ENCODE measurements at regions of chr17 and their contacts with region 1.

Region 1: GRCh38 chr17:28726226-28727130 is at the start of gene TLCD1:
- DNase-seq: peak; percentile 93 to 98
- H3K4me3 ChIP-seq: peak within 1 kb of the TSS; percentile 81 to 97 (median 89)
- H3K27ac ChIP-seq: peak within 1 kb of the TSS; percentile 89
- H3K4me1 ChIP-seq: peaks cover 0 to 12% (median 5%) of the 10 kb centered on the region in 4 experiments; a peak in 6 of 7 replicates
- H3K27me3 ChIP-seq: no peaks in the 10 kb centered on the region
- CTCF ChIP-seq: peak; percentile 98 to 99 (median 99)
- EP300 ChIP-seq: peak in 1 of 2 experiments; percentile 70; a peak in 1 of 3 replicates
- POLR2A ChIP-seq: no peak; a peak in 2 of 3 replicates
- RAD21 ChIP-seq: peak; percentile 98 to 99
- total RNA-seq, gene TLCD1: 40.7 and 45.3 TPM in 2 replicates

Region 2: DNA sequence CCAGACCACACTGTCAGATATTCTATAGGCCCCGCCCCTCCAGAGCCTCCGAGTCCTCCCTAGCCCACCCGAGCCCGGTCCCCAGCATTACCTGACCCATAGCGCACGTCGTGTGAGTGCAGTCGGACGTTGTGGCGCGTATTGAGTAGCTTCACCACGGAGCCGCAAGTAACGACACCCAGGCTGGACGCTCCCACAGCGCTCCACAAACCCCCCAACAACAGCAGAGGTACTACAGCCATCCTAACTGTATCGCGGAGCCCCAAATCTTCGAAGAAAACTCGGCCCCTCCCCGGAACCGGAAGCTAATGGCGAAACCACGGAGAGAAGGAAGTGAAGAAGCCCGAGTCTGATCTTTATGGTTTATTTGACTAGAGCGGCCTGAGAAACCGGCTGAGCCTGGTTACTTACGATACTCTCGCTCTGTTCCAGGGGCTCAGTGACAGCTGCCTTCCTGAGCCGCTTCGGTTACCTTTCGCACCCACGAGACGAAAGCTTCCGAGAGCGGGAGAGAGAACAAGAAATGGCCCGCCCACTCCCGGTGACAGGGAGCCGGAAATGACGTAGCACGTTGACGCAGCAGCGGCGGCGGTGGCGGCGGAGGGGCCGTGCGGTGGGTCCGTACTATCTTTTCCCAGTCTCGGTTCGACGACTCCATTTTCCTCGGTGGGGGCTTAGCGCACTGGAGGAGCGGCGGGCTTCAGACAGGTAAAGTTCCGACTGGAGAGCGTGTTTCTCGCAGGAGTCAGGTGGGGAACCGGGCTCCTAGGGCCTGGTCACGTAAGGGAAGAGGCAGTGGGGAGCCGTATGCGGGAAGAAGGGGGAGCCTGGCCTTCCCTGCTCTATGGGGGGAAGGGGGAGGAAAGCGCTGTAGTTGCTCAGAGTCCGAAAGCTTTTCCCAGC is 64.6 kb before region 1 on chr17 and contains the starts of genes SDF2 and SUPT6H:
- CTCF ChIA-PET with region 1: no interaction called
- POLR2A ChIA-PET with region 1: interaction called, 10 read pairs
- DNase-seq: peak in 1 of 2 experiments; percentile 98
- H3K4me3 ChIP-seq: peak within 1 kb of the TSS; percentile 85 to 99 (median 96)
- H3K27ac ChIP-seq: peak within 1 kb of the TSS; percentile 92
- H3K4me1 ChIP-seq: peaks cover 0 to 2% (median 0%) of the 10 kb centered on the region in 4 experiments; a peak in 3 of 7 replicates
- H3K27me3 ChIP-seq: no peaks in the 10 kb centered on the region
- CTCF ChIP-seq: no peak
- EP300 ChIP-seq: no peak
- POLR2A ChIP-seq: peak; percentile 75 to 76; a peak in 2 of 3 replicates
- RAD21 ChIP-seq: no peak
- total RNA-seq, gene SDF2: 43.6 and 44.8 TPM in 2 replicates
- total RNA-seq, gene SUPT6H: 59.9 and 62.4 TPM in 2 replicates

Region 3: DNA sequence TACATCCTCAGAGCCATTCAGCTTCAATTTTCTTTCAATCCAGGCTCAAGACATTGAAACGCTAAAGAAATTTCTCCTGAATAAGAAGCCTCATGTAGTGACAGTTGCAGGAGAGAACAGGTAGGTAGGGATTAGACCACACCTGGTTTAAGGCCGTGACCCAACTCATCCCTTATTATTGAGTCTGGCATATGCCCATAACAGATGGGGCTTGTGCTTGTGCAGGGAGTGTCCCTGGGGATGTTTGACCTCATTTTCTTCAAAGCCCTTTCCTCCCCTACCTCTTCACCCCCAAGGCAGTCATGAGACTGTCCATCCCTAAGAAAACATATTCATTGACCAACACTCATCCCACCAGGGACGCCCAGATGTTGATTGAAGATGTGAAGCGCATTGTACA is 40.2 kb before region 1 on chr17:
- CTCF ChIA-PET with region 1: no interaction called
- POLR2A ChIA-PET with region 1: no interaction called
- DNase-seq: no peak
- H3K4me3 ChIP-seq: no peak overlapping the region
- H3K27ac ChIP-seq: no peak overlapping the region
- H3K4me1 ChIP-seq: no peaks in the 10 kb centered on the region
- H3K27me3 ChIP-seq: no peaks in the 10 kb centered on the region
- CTCF ChIP-seq: no peak
- EP300 ChIP-seq: no peak
- POLR2A ChIP-seq: no peak
- RAD21 ChIP-seq: no peak

Region 4: DNA sequence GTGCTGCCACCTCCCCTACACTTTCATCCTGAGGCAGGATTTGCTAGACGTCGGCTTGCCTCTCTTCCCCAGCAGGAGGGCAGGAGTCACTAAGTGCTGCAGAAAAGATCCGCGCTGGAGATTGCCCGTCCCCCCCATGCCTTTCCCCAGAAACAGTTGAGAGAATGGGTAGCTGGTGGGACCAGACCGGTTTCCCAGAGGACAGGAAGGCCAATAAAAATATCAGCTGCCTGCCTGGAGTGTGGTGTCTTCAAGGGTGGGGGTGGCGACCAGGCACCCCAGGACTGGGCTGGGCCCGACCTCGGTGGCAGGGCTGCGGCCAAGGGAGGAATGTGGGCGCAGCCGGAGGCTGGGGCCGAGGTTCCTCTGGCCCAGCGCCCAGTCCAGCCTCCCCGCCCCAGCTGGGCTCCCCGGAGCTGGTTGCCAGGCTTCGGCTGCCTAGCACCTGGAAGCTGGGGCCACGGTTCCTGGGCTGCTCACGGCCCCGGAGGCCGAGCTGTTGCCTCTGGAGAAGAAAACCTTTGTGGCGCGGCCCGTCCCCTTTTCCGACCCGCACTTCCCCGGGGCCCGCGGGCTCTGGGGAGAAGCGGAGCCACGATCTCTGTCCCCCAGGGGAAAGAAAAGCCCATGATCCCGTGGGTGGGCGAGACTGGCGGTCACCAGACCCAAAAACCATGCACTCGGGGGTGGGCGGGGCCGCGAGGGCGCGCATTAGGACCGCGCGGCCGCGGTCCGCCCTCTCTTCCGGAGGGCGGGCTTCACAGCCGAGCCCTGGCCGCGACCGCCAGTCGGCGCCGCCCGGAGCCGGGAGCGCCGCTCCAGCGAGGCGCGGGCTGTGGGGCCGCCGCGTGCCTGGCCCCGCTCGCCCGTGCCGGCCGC is 17.0 kb after region 1 on chr17 and contains the start of gene TRAF4:
- CTCF ChIA-PET with region 1: interaction called, 316 read pairs
- POLR2A ChIA-PET with region 1: interaction called, 813 read pairs
- DNase-seq: peak in 1 of 2 experiments; percentile 87
- H3K4me3 ChIP-seq: peak within 1 kb of the TSS; percentile 94 to 99 (median 98)
- H3K27ac ChIP-seq: peak within 1 kb of the TSS; percentile 99
- H3K4me1 ChIP-seq: peaks cover 0 to 30% (median 24%) of the 10 kb centered on the region in 4 experiments; a peak in 6 of 7 replicates
- H3K27me3 ChIP-seq: no peaks in the 10 kb centered on the region
- CTCF ChIP-seq: peak in 2 of 3 experiments; percentile 8 to 17; a peak in 2 of 4 replicates
- EP300 ChIP-seq: no peak
- POLR2A ChIP-seq: peak; percentile 84 to 94; a peak in 2 of 3 replicates
- RAD21 ChIP-seq: no peak
- total RNA-seq, gene TRAF4: 167 TPM in 2 replicates

Region 5: GRCh38 chr17:28861393-28862203 is 135.1 kb after region 1 on chr17:
- CTCF ChIA-PET with region 1: interaction called, 11 read pairs
- POLR2A ChIA-PET with region 1: interaction called, 4 read pairs
- DNase-seq: no peak
- H3K4me3 ChIP-seq: 0 out of 8 replicates have a peak overlapping the region, but pooled peaks of 1 of the 4 experiments have one; percentile 33
- H3K27ac ChIP-seq: no peak overlapping the region
- H3K4me1 ChIP-seq: peaks cover 0 to 6% (median 0%) of the 10 kb centered on the region in 4 experiments; a peak in 2 of 7 replicates
- H3K27me3 ChIP-seq: no peaks in the 10 kb centered on the region
- CTCF ChIP-seq: no peak
- EP300 ChIP-seq: no peak
- POLR2A ChIP-seq: no peak
- RAD21 ChIP-seq: no peak

Region 6: DNA sequence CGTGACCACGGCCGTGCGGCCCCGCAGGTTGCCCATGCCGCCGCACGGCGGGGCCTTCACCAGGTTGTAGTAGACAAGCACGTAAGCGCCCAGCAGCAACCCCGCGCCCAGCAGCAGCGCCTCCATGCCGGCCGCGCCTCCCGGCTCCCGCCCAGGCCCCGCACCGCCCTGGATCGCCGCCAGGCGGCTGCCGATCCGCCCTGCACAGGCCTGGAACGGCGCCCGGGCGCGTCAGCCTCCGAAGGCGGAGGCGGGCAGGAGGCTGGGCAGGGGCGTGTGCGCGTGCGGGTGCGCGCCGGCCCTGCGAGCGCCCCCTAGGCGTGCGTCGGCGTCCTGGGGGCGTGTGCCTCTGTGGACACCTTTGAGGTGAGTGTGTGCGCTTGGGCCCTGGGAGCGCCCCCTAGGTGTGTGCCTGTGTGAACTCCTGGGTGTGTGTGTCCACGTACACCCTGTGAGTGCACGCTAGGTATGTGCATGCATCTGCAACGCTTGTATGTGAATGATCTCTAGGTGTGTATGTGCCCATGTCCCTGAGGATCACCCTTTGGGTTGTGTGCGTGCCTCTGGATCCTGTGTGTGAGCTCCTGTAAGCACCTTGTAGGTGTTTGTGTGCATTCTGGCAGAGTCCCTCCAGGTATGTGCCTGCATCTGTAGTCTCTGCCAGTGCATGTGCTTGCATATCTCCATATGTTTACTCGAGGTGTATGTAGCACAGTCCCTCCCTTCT is 176.5 kb after region 1 on chr17 and contains the start of gene DHRS13:
- CTCF ChIA-PET with region 1: interaction called, 45 read pairs
- POLR2A ChIA-PET with region 1: interaction called, 71 read pairs
- DNase-seq: peak; percentile 87 to 97
- H3K4me3 ChIP-seq: peak within 1 kb of the TSS; percentile 52 to 85 (median 72)
- H3K27ac ChIP-seq: peak within 1 kb of the TSS; percentile 54
- H3K4me1 ChIP-seq: peaks cover 0 to 9% (median 5%) of the 10 kb centered on the region in 4 experiments; a peak in 5 of 7 replicates
- H3K27me3 ChIP-seq: no peaks in the 10 kb centered on the region
- CTCF ChIP-seq: peak; percentile 76 to 100 (median 99)
- EP300 ChIP-seq: peak in 1 of 2 experiments; percentile 65; a peak in 1 of 3 replicates
- POLR2A ChIP-seq: no peak
- RAD21 ChIP-seq: peak; percentile 23 to 64
- total RNA-seq, gene DHRS13: 22.1 and 23.7 TPM in 2 replicates

Region 7: GRCh38 chr17:28951991-28952975 is 225.8 kb after region 1 on chr17:
- CTCF ChIA-PET with region 1: interaction called, 7 read pairs
- POLR2A ChIA-PET with region 1: interaction called, 37 read pairs
- DNase-seq: peak; percentile 89 to 96
- H3K4me3 ChIP-seq: peak overlapping the region; percentile 68 to 97 (median 84)
- H3K27ac ChIP-seq: peak overlapping the region; percentile 92
- H3K4me1 ChIP-seq: peaks cover 9 to 28% (median 14%) of the 10 kb centered on the region in 4 experiments; a peak in 5 of 7 replicates
- H3K27me3 ChIP-seq: no peaks in the 10 kb centered on the region
- CTCF ChIP-seq: no peak
- EP300 ChIP-seq: no peak
- POLR2A ChIP-seq: peak; percentile 49 to 60; a peak in 2 of 3 replicates
- RAD21 ChIP-seq: no peak

Measured in H1 (cell line).